ENCODE measurements at regions of chr3 and their contacts with region 1.

Region 1: GRCh38 chr3:23916886-23917678 is at the starts of genes NKIRAS1 and RPL15:
- H3K4me3 ChIP-seq: peak within 1 kb of the TSS; percentile 100
- H3K27ac ChIP-seq: peak within 1 kb of the TSS; percentile 98
- H3K4me1 ChIP-seq: peaks cover 7% of the 10 kb centered on the region
- CTCF ChIP-seq: peak; percentile 78; the same call in 1 of the 2 replicates

Region 2: GRCh38 chr3:23805633-23806533 is 111.2 kb before region 1 on chr3 and contains the start of gene UBE2E1:
- CTCF ChIA-PET with region 1: no interaction called
- POLR2A ChIA-PET with region 1: interaction called, 10 read pairs
- H3K4me3 ChIP-seq: peak within 1 kb of the TSS; percentile 68
- H3K27ac ChIP-seq: peak within 1 kb of the TSS; percentile 71
- H3K4me1 ChIP-seq: 0 out of 2 replicates have a peak, but pooled peaks cover 6% of the 10 kb centered on the region
- CTCF ChIP-seq: no peak

Region 3: DNA sequence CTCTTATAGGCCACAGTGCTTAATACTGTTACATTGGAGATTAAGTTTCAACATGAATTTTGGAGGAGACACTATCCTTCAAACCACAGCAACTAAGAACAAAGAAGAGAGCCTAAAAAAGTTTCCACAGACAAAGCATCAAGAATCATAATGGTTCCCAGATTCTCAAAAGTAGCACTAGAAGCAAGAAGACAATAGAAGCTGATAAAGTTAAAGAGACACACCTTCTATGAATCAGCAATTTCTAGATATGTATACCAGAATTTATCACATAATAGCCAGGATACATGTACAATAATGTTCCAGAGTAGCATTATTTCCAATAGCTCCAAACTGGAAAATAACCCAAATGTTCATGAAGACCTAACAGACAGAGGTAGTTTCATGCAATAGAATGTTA is 12.5 kb before region 1 on chr3:
- CTCF ChIA-PET with region 1: no interaction called
- POLR2A ChIA-PET with region 1: interaction called, 14 read pairs
- H3K4me3 ChIP-seq: no peak overlapping the region
- H3K27ac ChIP-seq: no peak overlapping the region
- H3K4me1 ChIP-seq: no peaks in the 10 kb centered on the region
- CTCF ChIP-seq: no peak

Region 4: GRCh38 chr3:23934253-23934652 is 17.2 kb after region 1 on chr3:
- CTCF ChIA-PET with region 1: no interaction called
- POLR2A ChIA-PET with region 1: interaction called, 15 read pairs
- H3K4me3 ChIP-seq: no peak overlapping the region
- H3K27ac ChIP-seq: no peak overlapping the region
- H3K4me1 ChIP-seq: no peaks in the 10 kb centered on the region
- CTCF ChIP-seq: no peak

Region 5: DNA sequence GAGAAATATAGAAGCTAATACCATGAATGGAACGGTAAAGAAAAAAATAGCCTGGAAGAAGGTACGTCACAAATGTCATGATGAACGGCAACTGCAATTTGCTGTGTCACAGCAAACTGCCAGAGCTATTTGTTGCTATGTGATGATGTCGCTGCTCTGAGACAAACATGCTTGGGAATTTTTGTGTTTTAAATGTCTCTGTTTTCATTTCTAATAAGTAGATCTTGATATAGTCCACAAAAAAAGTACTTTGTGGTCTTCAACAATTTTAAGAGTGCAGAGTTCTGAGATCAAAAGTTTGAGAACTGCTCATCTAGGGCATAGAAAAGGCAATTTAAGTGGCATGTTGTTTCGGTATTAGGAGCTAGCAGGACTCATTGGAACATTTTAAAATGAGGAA is 23.7 kb after region 1 on chr3:
- CTCF ChIA-PET with region 1: interaction called, 4 read pairs
- POLR2A ChIA-PET with region 1: interaction called, 24 read pairs
- H3K4me3 ChIP-seq: no peak overlapping the region
- H3K27ac ChIP-seq: no peak overlapping the region
- H3K4me1 ChIP-seq: no peaks in the 10 kb centered on the region
- CTCF ChIP-seq: no peak

Region 6: DNA sequence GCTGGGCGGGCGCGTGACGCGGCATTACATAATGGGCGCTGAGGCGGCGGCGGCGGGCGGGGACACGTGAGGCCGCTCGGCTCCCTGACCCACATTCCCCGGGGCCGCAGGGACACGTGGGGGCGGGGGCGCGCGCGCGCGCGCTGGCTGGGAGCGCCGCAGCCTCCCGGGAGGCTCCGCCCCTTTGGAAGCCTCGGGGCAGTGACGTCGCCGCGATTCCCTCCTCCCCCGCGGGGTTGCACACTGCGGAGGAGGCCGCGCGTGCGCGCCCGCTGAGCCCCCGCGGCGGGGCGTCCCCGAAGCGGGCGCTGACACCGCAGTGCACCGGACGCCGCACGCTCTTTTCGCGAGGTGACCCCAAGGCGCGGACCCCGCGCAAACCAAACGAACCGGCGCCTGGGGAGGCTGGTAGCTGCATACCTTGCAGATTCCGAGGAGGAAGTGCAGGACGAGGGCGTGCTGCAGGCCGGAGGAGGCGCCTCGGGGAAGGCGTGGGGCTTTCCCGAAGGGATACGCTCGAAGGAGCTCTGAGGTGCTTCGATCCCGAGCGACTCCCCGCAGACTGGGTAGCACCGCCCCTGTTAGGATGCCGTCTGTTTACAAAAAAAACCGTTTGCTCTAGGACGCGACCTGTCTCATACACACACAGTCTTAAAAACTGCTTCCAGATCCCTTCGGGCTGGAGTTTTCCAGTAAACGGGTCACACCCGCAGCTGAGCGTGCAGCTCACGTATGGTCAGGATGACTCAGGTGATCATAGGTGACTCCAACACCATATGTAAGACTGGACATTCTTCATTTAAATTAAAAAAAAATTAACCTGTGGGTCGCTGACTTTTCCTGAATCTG is 29.0 kb after region 1 on chr3:
- CTCF ChIA-PET with region 1: interaction called, 4 read pairs
- POLR2A ChIA-PET with region 1: interaction called, 24 read pairs
- H3K4me3 ChIP-seq: peak overlapping the region; percentile 80
- H3K27ac ChIP-seq: peak overlapping the region; percentile 72
- H3K4me1 ChIP-seq: peaks cover 2% of the 10 kb centered on the region; the same call in 1 of the 2 replicates
- CTCF ChIP-seq: peak; percentile 63; the same call in 1 of the 2 replicates

Region 7: GRCh38 chr3:23959135-23959900 is 42.2 kb after region 1 on chr3:
- CTCF ChIA-PET with region 1: no interaction called
- POLR2A ChIA-PET with region 1: interaction called, 13 read pairs
- H3K4me3 ChIP-seq: no peak overlapping the region
- H3K27ac ChIP-seq: no peak overlapping the region
- H3K4me1 ChIP-seq: no peaks in the 10 kb centered on the region; the same call in 1 of the 2 replicates
- CTCF ChIP-seq: no peak

Measured in HEK293 (cell line).